ENCODE measurements at regions of chr5 and their contacts with region 1.

Region 1: DNA sequence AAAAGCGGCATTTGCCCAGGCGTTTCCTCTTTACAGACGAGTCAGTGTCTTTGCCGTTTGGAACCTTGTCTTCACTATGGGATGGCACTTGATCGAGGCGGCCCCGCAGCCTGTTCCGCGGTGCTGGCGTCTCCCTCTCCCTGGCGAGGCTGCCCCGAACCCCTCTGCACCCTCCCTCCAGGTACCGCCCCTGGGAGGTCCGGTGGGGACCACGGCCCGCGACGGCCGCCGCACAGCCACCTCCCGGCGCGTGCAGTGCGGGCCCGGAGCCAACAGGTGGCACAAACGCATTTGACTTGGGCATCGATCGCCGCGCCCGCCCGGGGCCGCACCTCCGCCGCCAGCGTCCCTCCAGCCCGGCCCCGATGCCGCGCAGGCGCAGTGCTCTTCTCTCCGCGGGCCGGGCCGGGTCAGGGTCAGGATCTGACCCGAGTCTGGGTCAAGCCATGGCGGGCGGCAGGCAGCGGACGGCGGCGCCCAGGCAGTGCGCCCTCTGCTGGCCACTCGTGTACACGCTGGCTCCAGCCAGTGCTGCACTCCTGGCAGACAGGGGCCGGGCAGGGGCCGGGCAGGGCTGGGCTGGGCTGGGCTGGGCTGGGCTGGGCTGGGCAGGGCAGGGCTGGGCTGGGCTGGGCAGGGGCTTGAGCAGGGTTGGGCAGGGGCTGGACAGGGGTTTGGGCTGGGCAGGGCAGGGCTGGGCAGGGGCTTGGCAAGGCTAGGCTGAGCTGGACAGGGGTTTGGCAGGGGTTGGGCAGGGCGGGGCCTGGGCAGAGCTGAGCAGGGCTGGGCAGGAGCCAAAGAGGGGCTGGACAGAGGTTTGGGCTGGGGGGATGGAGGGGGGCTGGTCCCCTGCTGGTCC is 155.8 kb upstream of the IRX4 start:
- DNase-seq: peak; percentile 10 to 28
- ATAC-seq: peak; percentile 68 to 92
- H3K4me3 ChIP-seq: peak overlapping the region; percentile 37 to 61 (median 52)
- H3K27ac ChIP-seq: no peak overlapping the region
- H3K4me1 ChIP-seq: no peaks in the 10 kb centered on the region
- H3K27me3 ChIP-seq: peaks cover 4 to 8% (median 8%) of the 10 kb centered on the region in 3 donors
- CTCF ChIP-seq: peak; percentile 39 to 78 (median 67)
- POLR2A ChIP-seq: no peak

Region 2: GRCh38 chr5:1763548-1763911 is 275.0 kb before region 1 on chr5:
- in situ Hi-C with region 1: loop called in 3 of 4 experiments (anchors 25 kb)
- intact Hi-C with region 1: loop called (anchors 1 kb)
- DNase-seq: no peak
- ATAC-seq: no peak
- H3K4me3 ChIP-seq: no peak overlapping the region
- H3K27ac ChIP-seq: no peak overlapping the region
- H3K4me1 ChIP-seq: no peaks in the 10 kb centered on the region
- H3K27me3 ChIP-seq: peaks cover 4 to 15% (median 11%) of the 10 kb centered on the region in 3 donors
- CTCF ChIP-seq: peak in 2 of 5 experiments; percentile 48 to 51
- POLR2A ChIP-seq: no peak

Region 3: DNA sequence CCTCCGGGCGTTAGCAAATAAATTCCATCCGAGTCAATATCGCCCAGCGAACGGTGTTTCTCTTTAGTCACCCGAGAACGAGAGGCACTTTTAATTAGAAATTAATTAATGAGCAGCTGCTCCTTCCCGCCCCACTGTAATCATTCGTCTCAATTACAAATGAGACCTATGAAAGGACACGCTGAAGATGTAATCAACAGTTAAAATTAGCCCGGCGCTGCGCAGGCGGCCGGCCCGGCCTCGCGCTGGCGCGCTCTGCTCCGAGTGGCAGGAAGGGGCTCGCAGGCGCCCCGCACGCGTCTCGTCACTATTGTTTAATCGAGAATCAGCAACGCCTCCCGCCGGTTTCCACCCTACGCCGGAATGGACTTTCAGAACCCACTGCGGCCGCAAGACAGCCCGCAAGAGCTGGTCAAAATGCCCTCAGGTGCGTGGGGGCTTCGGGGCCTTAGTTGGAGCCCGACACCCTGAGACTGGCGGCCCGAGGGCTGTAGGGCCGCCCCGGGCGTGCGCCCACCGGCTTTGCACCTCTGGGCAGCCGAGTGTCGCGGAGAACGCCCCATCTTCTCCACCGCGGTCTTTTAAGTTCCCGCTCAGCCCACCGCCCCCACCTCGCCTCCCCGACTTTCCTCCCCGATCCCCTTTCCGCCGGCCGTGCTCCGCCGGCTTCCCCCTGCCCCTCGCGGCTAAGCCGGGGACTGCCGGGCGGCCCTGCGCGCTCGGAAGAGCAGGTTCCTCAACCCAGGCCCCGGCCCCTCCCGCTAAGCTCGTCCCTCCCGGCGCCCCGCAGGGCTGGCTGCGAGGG is 155.2 kb before region 1 on chr5:
- in situ Hi-C with region 1: no loop called
- intact Hi-C with region 1: loop called (anchors 10 kb)
- DNase-seq: no peak
- ATAC-seq: peak in 1 of 2 donors; percentile 84
- H3K4me3 ChIP-seq: peak overlapping the region; percentile 27 to 58 (median 51)
- H3K27ac ChIP-seq: peak overlapping the region in 1 of 4 donors; percentile 41
- H3K4me1 ChIP-seq: peaks cover 0 to 4% of the 10 kb centered on the region in 2 donors
- H3K27me3 ChIP-seq: peaks cover 70 to 90% (median 85%) of the 10 kb centered on the region in 3 donors
- CTCF ChIP-seq: peak in 1 of 5 experiments; percentile 15
- POLR2A ChIP-seq: peak; percentile 25